ENCODE measurements at regions of chr10 and their contacts with region 1.

Region 1: GRCh38 chr10:79562135-79562756 is 2.0 kb upstream of the SFTPA2 start:
- DNase-seq: no peak
- ATAC-seq: peak; percentile 97
- H3K4me3 ChIP-seq: no peak overlapping the region
- H3K27ac ChIP-seq: no peak overlapping the region
- H3K4me1 ChIP-seq: no peaks in the 10 kb centered on the region
- H3K27me3 ChIP-seq: 0 out of 4 replicates have a peak, but pooled peaks cover 0 to 3% of the 10 kb centered on the region in 2 experiments
- CTCF ChIP-seq: peak; percentile 84 to 87 (median 86)
- EP300 ChIP-seq: no peak
- POLR2A ChIP-seq: no peak
- RAD21 ChIP-seq: peak; percentile 82

Region 2: GRCh38 chr10:79608505-79609375 is 46.5 kb after region 1 on chr10:
- CTCF ChIA-PET with region 1: no interaction called
- POLR2A ChIA-PET with region 1: no interaction called
- RAD21 ChIA-PET with region 1: no interaction called
- SMC1A ChIA-PET with region 1: no interaction called
- in situ Hi-C with region 1: no loop called
- intact Hi-C with region 1: loop called (anchors 2 kb)
- DNase-seq: no peak
- ATAC-seq: peak; percentile 81
- H3K4me3 ChIP-seq: no peak overlapping the region
- H3K27ac ChIP-seq: no peak overlapping the region
- H3K4me1 ChIP-seq: no peaks in the 10 kb centered on the region
- H3K27me3 ChIP-seq: no peaks in the 10 kb centered on the region
- CTCF ChIP-seq: peak; percentile 59 to 71 (median 61)
- EP300 ChIP-seq: no peak
- POLR2A ChIP-seq: no peak
- RAD21 ChIP-seq: peak; percentile 61

Region 3: DNA sequence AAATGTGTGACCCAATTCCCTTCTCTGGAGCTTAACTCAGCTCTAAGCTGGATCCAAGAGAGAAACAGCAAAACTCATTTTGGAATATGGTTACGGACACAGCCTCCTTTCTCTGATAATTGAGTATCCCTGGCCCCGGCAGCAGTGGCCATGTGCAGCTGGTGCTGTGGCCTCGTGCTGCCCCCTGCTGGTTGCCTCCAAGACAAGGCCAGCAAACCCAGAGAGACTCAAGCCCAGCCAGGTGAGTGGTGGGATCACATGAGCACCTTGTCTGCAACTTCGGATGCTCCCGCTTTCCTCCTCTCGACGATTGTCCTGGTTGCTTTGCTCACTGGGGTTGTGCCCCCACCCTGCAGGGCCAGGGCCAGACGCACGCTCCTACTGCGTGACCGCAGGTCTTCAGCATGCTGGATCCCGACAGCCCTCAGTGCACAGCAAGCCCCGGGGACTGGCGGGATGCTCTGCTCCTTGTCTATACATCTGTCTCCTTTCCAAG is 367.2 kb after region 1 on chr10:
- CTCF ChIA-PET with region 1: interaction called, 3 read pairs
- POLR2A ChIA-PET with region 1: no interaction called
- RAD21 ChIA-PET with region 1: no interaction called
- SMC1A ChIA-PET with region 1: no interaction called
- in situ Hi-C with region 1: loop called (anchors 5 kb)
- intact Hi-C with region 1: loop called (anchors 1 kb)
- DNase-seq: no peak
- ATAC-seq: peak; percentile 99
- H3K4me3 ChIP-seq: no peak overlapping the region
- H3K27ac ChIP-seq: no peak overlapping the region
- H3K4me1 ChIP-seq: no peaks in the 10 kb centered on the region
- H3K27me3 ChIP-seq: no peaks in the 10 kb centered on the region; a peak in 2 of 4 replicates
- CTCF ChIP-seq: peak; percentile 89 to 90 (median 89)
- EP300 ChIP-seq: no peak
- POLR2A ChIP-seq: no peak
- RAD21 ChIP-seq: peak; percentile 98

Region 4: GRCh38 chr10:80046629-80047441 is 484.6 kb after region 1 on chr10:
- CTCF ChIA-PET with region 1: interaction called, 3 read pairs
- POLR2A ChIA-PET with region 1: no interaction called
- RAD21 ChIA-PET with region 1: no interaction called
- SMC1A ChIA-PET with region 1: no interaction called
- in situ Hi-C with region 1: no loop called
- intact Hi-C with region 1: loop called (anchors 5 kb)
- DNase-seq: no peak
- ATAC-seq: peak; percentile 97
- H3K4me3 ChIP-seq: no peak overlapping the region
- H3K27ac ChIP-seq: no peak overlapping the region
- H3K4me1 ChIP-seq: no peaks in the 10 kb centered on the region
- H3K27me3 ChIP-seq: no peaks in the 10 kb centered on the region; a peak in 1 of 4 replicates
- CTCF ChIP-seq: peak; percentile 83 to 94 (median 93)
- EP300 ChIP-seq: no peak
- POLR2A ChIP-seq: no peak
- RAD21 ChIP-seq: peak; percentile 69